Activated T-helper 1 cell treated with anti-CD3 and anti-CD28 coated beads, Interleukin-12 subunit alpha, Interleukin-12 subunit beta, Interleukin-2, Interleukin-4 antibody, amounts not matched to agents 30 ng/mL and 10 ng/mL and 1 ng/mL, durations not matched to agents 14 hours and 24 hours and 36 hours (primary cell): ENCODE measurements at regions of chr11 and their contacts with region 1.

Region 1: GRCh38 chr11:18526521-18527296 is at the start of gene TSG101:
- DNase-seq: peak; percentile 92
- H3K4me3 Mint-ChIP-seq: peak within 1 kb of the TSS; percentile 97
- H3K27ac Mint-ChIP-seq: peak within 1 kb of the TSS; percentile 100
- H3K4me1 Mint-ChIP-seq: peaks cover 36% of the 10 kb centered on the region
- H3K27me3 Mint-ChIP-seq: peaks cover 4% of the 10 kb centered on the region
- total RNA-seq, gene TSG101: 41.8 and 49.7 TPM in 2 replicates

Region 2: DNA sequence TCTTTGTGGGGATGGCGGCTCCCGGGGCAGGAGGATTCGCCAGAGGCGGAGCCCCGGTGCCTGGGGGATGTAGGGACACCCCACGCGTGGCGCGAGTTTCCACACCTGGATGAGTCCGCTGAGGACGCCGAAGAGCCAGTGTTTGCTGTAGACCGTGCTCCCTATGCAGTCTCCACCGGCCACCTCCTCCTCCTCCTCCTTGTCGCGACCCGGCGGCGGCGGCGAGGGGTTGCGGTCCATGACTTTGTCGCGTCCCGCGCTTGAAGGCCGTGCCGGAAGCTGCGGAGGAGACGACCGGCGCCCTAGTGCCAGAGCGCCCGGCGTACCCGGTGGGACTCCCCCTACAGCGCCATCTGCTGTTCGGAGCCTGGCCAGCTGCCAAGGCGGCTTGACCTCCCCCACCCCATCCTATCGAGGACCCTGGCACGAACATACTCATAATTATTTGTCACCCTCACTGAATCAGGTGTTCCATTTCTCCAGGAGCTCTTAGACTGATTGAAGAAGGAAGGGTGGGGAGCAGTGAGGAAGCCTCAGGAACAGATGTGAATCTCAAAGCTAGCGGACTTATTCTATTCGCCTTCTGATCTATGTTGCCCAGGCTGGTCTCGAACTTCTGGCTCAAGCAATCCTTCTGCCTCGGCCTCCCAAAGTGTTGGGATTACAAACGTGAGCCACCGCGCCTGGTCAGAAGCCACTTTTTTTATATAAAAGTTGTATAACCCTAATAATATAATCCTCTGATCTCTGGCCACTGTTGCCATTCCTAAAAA is 420.7 kb before region 1 on chr11 and contains the start of gene SAAL1:
- intact Hi-C with region 1: loop called (anchors 2 kb)
- DNase-seq: peak; percentile 86
- H3K4me3 Mint-ChIP-seq: peak within 1 kb of the TSS; percentile 94
- H3K27ac Mint-ChIP-seq: peak within 1 kb of the TSS; percentile 88
- H3K4me1 Mint-ChIP-seq: peaks cover 33% of the 10 kb centered on the region
- H3K27me3 Mint-ChIP-seq: peaks cover 3% of the 10 kb centered on the region
- total RNA-seq, gene SAAL1: 42.5 and 42.9 TPM in 2 replicates

Region 3: GRCh38 chr11:18383388-18384156 is 143.1 kb before region 1 on chr11:
- intact Hi-C with region 1: loop called (anchors 1 kb)
- DNase-seq: peak; percentile 53
- H3K4me3 Mint-ChIP-seq: peak overlapping the region; percentile 59
- H3K27ac Mint-ChIP-seq: peak overlapping the region; percentile 99
- H3K4me1 Mint-ChIP-seq: peaks cover 38% of the 10 kb centered on the region
- H3K27me3 Mint-ChIP-seq: no peaks in the 10 kb centered on the region

Region 4: DNA sequence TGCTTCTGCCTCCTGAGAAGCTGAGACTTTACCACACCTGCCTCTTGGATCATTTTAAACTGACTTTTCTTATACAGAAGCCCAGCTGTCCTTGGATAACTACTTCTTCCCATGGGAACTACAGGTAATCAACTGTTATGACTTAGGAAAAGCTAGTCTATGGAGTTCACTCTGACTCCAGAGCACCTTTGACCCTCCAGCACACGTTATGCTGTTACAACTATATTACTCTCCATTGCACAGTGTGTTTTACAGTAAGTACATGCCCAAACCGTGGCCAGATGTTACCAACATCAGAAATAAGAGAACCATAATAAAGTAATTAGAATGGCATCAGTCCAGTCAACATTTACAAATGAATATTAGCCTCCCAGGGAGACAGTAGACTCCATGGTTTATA is 21.3 kb after region 1 on chr11:
- intact Hi-C with region 1: no loop called
- DNase-seq: no peak
- H3K4me3 Mint-ChIP-seq: no peak overlapping the region
- H3K27ac Mint-ChIP-seq: no peak overlapping the region
- H3K4me1 Mint-ChIP-seq: no peaks in the 10 kb centered on the region
- H3K27me3 Mint-ChIP-seq: no peaks in the 10 kb centered on the region

Region 5: GRCh38 chr11:18588297-18589252 is 61.9 kb after region 1 on chr11 and contains the start of gene UEVLD:
- intact Hi-C with region 1: loop called (anchors 1 kb)
- DNase-seq: peak; percentile 68
- H3K4me3 Mint-ChIP-seq: no peak within 1 kb of the TSS
- H3K27ac Mint-ChIP-seq: no peak within 1 kb of the TSS
- H3K4me1 Mint-ChIP-seq: peaks cover 11% of the 10 kb centered on the region
- H3K27me3 Mint-ChIP-seq: no peaks in the 10 kb centered on the region
- total RNA-seq, gene UEVLD: 31.2 and 31.4 TPM in 2 replicates

Region 6: GRCh38 chr11:18698341-18699268 is 171.9 kb after region 1 on chr11 and contains the start of gene TMEM86A:
- intact Hi-C with region 1: loop called (anchors 1 kb)
- DNase-seq: peak; percentile 89
- H3K4me3 Mint-ChIP-seq: peak within 1 kb of the TSS; percentile 83
- H3K27ac Mint-ChIP-seq: peak within 1 kb of the TSS; percentile 65
- H3K4me1 Mint-ChIP-seq: peaks cover 25% of the 10 kb centered on the region
- H3K27me3 Mint-ChIP-seq: peaks cover 22% of the 10 kb centered on the region
- total RNA-seq, gene TMEM86A: 0.52 and 0.93 TPM in 2 replicates

Region 7: DNA sequence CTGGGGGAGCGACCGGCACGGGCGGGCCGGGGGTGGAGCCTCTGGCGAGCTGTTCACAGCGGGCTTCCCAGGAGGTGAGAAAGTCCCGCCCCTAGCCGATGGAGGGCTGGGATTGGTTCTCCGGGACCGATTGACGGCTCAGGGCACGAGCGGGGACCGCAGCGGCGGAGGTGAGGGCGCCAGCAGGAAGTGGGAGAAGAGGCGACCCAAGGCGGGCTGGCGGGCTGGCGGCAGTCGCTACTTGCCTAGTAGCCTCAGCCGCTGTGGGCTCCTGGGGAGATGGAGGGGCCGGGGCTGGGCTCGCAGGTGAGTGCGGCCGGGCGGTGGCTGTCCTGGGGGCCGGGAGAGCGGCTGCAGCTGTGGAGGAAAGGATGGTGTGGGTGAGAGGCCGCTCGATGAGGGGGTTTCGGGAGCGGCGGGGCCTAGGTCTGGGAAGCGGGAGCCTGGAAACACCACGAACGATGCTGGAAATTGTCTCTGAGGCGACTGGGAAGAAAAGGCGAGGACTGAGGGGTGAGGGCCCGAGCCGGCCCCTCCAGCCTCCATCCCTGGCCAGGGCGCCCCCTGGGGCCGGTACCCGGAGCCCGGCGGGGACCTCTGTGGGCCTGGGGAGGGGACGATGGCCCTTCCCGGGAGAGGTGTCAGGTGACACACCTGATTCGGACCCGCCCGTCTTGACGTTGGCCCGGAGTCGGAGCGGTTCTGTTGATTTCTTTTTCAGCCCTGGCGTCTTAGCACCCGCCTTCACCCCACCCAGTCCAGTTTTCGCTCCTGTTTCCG is 590.5 kb after region 1 on chr11 and contains the start of gene ZDHHC13:
- intact Hi-C with region 1: loop called (anchors 2 kb)
- DNase-seq: peak; percentile 94
- H3K4me3 Mint-ChIP-seq: peak within 1 kb of the TSS; percentile 93
- H3K27ac Mint-ChIP-seq: peak within 1 kb of the TSS; percentile 84
- H3K4me1 Mint-ChIP-seq: peaks cover 54% of the 10 kb centered on the region
- H3K27me3 Mint-ChIP-seq: peaks cover 12% of the 10 kb centered on the region
- total RNA-seq, gene ZDHHC13: 25.0 and 28.9 TPM in 2 replicates

Region 8: DNA sequence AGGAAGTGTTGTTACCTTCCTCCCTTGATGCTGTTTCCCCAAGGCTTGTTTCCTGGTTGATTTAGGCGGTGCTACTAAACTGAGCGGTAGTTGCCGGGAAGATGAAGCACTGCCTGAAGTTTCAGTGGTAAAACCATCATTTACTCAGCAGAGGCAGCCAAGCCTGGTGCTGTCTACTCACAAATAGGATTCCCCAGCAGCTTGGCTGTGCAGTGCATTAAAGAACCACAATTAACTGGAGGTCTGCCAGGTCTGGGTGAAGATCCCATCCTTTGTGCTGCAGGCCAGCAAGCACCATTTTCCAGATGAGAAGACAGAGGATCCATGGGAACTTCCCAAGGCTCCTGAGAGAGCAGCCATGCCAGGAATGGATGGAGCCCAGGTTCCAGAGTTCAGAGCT is 946.0 kb after region 1 on chr11:
- intact Hi-C with region 1: no loop called
- DNase-seq: no peak
- H3K4me3 Mint-ChIP-seq: no peak overlapping the region
- H3K27ac Mint-ChIP-seq: no peak overlapping the region
- H3K4me1 Mint-ChIP-seq: no peaks in the 10 kb centered on the region
- H3K27me3 Mint-ChIP-seq: no peaks in the 10 kb centered on the region